ENCODE measurements at regions of chrX and their contacts with region 1.

Region 1: GRCh38 chrX:48911412-48912182 is at the start of gene SLC35A2:
- DNase-seq: peak; percentile 79
- ATAC-seq: peak; percentile 66
- H3K4me3 Mint-ChIP-seq: peak within 1 kb of the TSS; percentile 94
- H3K27ac Mint-ChIP-seq: peak within 1 kb of the TSS; percentile 99
- H3K4me1 Mint-ChIP-seq: peaks cover 33% of the 10 kb centered on the region
- H3K27me3 Mint-ChIP-seq: no peaks in the 10 kb centered on the region
- CTCF ChIP-seq: no peak
- total RNA-seq, gene SLC35A2: 18.0 to 21.0 TPM (median 20.2 TPM) in 3 replicates

Region 2: DNA sequence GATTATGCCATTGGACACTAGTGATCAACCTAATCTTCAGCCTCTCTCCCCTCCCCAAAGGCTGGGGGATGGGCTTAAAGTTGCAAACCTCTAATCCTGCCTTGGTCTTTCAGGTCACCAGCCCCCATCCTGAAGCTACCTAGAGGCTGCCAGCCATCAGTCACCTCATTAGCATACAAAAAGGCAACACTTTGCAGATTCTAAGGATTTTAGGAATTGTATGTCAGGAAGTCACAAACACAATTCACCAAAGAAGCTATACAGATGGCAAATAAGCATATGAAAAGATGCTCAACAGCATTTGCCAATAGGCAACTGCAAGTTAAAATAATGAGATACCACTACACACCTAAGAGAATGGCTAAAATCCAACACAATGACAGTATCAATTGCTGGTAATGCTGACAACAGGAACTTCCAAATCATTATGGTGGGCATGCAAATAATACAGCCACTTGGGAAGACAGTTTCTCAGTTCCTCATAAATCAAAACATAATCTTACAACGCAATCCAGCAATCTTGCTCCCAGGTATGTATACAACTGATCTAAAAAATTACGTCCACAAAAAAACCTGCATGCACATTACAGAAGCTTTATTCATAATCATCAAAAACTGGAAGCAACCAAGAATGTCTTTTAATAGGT is 16.3 kb after region 1 on chrX:
- CTCF ChIA-PET with region 1: interaction called, 6 read pairs
- POLR2A ChIA-PET with region 1: interaction called, 11 read pairs
- DNase-seq: peak; percentile 52
- ATAC-seq: peak; percentile 88
- H3K4me3 Mint-ChIP-seq: peak overlapping the region; percentile 66
- H3K27ac Mint-ChIP-seq: peak overlapping the region; percentile 100
- H3K4me1 Mint-ChIP-seq: peaks cover 43% of the 10 kb centered on the region
- H3K27me3 Mint-ChIP-seq: no peaks in the 10 kb centered on the region
- CTCF ChIP-seq: no peak